Endothelial cell of umbilical vein (primary cell): ENCODE measurements at regions of chr5 and their contacts with region 1.

Region 1: GRCh38 chr5:154072414-154073171 is 33.8 kb downstream of the MFAP3 start:
- DNase-seq: peak; percentile 82
- H3K4me3 ChIP-seq: no peak overlapping the region
- H3K27ac ChIP-seq: no peak overlapping the region
- H3K4me1 ChIP-seq: no peaks in the 10 kb centered on the region
- H3K27me3 ChIP-seq: peaks cover 0 to 1% of the 10 kb centered on the region in 2 experiments
- CTCF ChIP-seq: peak; percentile 84 to 92
- POLR2A ChIP-seq: no peak

Region 2: GRCh38 chr5:154058055-154059038 is 14.2 kb before region 1 on chr5:
- CTCF ChIA-PET with region 1: interaction called, 26 read pairs
- POLR2A ChIA-PET with region 1: no interaction called
- dilution Hi-C with region 1: no loop called
- intact Hi-C with region 1: no loop called
- DNase-seq: no peak
- H3K4me3 ChIP-seq: no peak overlapping the region
- H3K27ac ChIP-seq: no peak overlapping the region
- H3K4me1 ChIP-seq: no peaks in the 10 kb centered on the region
- H3K27me3 ChIP-seq: no peaks in the 10 kb centered on the region
- CTCF ChIP-seq: no peak
- POLR2A ChIP-seq: no peak

Region 3: GRCh38 chr5:154189819-154190594 is 117.4 kb after region 1 on chr5:
- CTCF ChIA-PET with region 1: interaction called, 29 read pairs
- POLR2A ChIA-PET with region 1: no interaction called
- dilution Hi-C with region 1: no loop called
- intact Hi-C with region 1: no loop called
- DNase-seq: peak; percentile 55
- H3K4me3 ChIP-seq: peak overlapping the region; percentile 51 to 80 (median 56)
- H3K27ac ChIP-seq: peak overlapping the region; percentile 61
- H3K4me1 ChIP-seq: peaks cover 19% of the 10 kb centered on the region
- H3K27me3 ChIP-seq: no peaks in the 10 kb centered on the region
- CTCF ChIP-seq: peak; percentile 49 to 69
- POLR2A ChIP-seq: peak; percentile 56

Region 4: DNA sequence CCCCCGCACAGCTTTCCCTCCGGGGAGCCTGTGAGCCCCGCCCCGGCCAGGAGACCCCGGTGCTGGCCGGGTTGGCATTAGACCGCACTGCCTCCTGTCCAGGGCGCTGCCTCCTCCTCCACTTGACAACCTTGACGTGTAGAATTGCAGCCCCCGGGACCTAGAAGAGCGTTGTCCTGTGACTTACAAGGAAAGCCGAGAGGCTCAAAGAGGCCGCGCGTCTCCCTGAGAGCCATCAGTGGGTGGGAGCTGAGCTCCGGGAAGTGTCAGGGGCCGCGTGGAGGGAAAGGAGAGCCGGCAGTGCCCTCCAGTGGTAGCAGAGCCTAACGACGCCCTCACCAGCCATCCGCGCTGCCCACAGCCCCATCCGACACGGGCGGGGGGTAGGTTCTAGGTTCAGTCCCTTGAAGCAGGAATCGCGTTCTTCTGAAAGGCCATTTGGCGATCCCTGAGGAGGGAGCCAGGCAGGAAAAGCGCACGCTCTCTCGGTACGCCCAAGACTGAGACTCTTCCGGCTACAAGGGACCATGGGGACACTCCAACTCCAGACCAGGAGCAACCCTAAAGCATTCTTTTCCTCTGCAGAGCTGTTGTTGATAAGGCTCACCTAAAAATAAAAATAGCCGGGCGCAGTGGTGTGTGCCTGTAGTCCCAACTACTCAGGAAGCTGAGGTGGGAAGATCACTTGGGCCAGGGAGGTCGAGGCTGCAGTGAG is 332.6 kb after region 1 on chr5:
- CTCF ChIA-PET with region 1: interaction called, 175 read pairs
- POLR2A ChIA-PET with region 1: interaction called, 4 read pairs
- dilution Hi-C with region 1: no loop called
- intact Hi-C with region 1: loop called (anchors 1 kb)
- DNase-seq: peak; percentile 76
- H3K4me3 ChIP-seq: peak overlapping the region in 1 of 3 experiments; percentile 6
- H3K27ac ChIP-seq: no peak overlapping the region
- H3K4me1 ChIP-seq: no peaks in the 10 kb centered on the region
- H3K27me3 ChIP-seq: no peaks in the 10 kb centered on the region
- CTCF ChIP-seq: peak; percentile 88 to 95
- POLR2A ChIP-seq: no peak

Region 5: GRCh38 chr5:154461531-154461930 is 388.9 kb after region 1 on chr5:
- CTCF ChIA-PET with region 1: interaction called, 29 read pairs
- POLR2A ChIA-PET with region 1: no interaction called
- dilution Hi-C with region 1: no loop called
- intact Hi-C with region 1: loop called (anchors 1 kb)
- DNase-seq: no peak
- H3K4me3 ChIP-seq: no peak overlapping the region
- H3K27ac ChIP-seq: no peak overlapping the region
- H3K4me1 ChIP-seq: no peaks in the 10 kb centered on the region
- H3K27me3 ChIP-seq: peaks cover 0 to 2% of the 10 kb centered on the region in 2 experiments
- CTCF ChIP-seq: peak in 1 of 2 donors; percentile 9
- POLR2A ChIP-seq: no peak